Activated CD4-positive, alpha-beta T cell treated with anti-CD3 and anti-CD28 coated beads for 36 hours (primary cell): ENCODE measurements at regions of chr21 and their contacts with region 1.

Region 1: DNA sequence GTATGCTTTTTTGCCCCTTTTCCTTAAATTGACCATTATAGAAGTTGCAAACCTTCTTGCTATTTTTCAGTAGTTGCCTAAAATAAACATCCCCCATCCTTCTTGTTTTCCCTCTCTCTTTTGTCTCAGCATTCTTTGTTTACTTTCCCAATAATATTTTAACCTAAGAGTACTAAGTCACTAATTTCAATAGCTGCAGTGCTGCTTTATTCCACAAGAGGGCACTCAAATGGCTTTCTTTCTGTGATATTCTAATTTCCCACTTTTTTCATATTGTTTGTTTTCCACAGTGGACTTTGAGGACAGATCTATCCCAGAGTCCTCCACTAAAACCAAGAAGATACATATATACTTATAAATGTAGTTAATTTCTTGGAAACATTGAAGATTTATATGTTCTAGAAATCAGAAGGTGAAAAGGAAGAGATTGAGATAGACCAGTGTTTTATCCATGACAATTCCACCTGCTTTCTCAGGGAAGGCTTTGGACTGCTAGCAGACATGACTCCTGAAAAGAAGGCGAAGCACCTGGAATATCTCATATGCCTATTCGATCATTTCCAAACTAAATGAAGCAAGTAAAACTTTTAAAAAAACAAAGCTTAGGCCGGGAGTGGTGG is 104.8 kb upstream of the GRIK1 start:
- DNase-seq: peak; percentile 7
- ATAC-seq: no peak
- H3K4me3 Mint-ChIP-seq: no peak overlapping the region
- H3K27ac Mint-ChIP-seq: no peak overlapping the region
- H3K4me1 Mint-ChIP-seq: no peaks in the 10 kb centered on the region
- H3K27me3 Mint-ChIP-seq: peaks cover 5% of the 10 kb centered on the region

Region 2: GRCh38 chr21:30027986-30028385 is 16.6 kb before region 1 on chr21:
- CTCF ChIA-PET with region 1: interaction called, 18 read pairs
- POLR2A ChIA-PET with region 1: no interaction called
- intact Hi-C with region 1: no loop called
- DNase-seq: no peak
- ATAC-seq: no peak
- H3K4me3 Mint-ChIP-seq: no peak overlapping the region
- H3K27ac Mint-ChIP-seq: no peak overlapping the region
- H3K4me1 Mint-ChIP-seq: no peaks in the 10 kb centered on the region
- H3K27me3 Mint-ChIP-seq: peaks cover 6% of the 10 kb centered on the region

Region 3: DNA sequence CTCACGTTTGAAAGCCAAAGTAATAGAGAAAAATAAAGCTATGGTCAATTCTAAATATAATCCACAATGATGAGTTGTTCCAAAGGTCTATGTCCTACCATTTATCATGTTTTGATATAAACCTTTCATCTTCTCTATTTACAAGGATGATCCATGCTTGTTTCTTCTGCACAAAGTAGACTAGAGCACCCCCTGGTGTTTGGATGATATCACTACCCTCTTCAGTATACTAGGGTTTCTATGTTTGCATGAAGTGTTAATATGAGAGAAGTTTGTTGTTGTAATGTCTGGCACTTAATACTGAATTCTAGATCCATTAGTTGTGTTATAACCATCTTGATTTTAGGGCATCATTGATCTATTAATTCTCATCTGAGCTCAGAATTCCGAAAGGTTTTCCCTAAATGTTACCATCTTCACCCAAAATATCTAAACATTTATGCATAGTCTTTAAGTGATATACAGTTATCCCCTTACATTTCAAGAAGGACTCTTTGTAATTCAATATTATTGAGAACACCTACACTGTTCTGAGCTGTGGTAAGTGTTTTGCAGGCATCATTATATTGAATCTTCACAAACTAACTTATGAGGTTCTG is 150.2 kb after region 1 on chr21:
- CTCF ChIA-PET with region 1: interaction called, 4 read pairs
- POLR2A ChIA-PET with region 1: no interaction called
- intact Hi-C with region 1: loop called (anchors 2 to 10 kb)
- DNase-seq: peak; percentile 32
- ATAC-seq: peak; percentile 60
- H3K4me3 Mint-ChIP-seq: no peak overlapping the region
- H3K27ac Mint-ChIP-seq: no peak overlapping the region
- H3K4me1 Mint-ChIP-seq: no peaks in the 10 kb centered on the region
- H3K27me3 Mint-ChIP-seq: peaks cover 2% of the 10 kb centered on the region